PC-3 (cell line): ENCODE measurements at regions of chr5 and their contacts with region 1.

Region 1: DNA sequence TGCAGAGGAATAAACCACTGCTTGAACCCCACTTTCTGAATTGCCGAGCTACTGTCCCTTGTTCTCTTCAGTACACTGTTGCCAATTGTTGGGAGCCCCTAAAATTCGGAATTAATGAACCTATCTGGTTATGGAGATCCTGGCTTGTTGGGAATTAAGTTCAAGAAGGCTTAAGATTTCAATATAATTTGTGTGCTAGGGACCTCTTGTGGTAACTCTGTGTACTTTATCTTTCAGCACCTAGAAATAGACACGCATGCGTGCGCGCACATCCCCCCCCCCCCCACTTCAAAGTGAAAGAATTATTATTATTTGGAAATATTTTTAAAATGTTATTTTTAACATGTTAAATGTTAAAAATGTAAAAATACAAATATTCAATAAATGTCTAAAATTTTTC is 53.3 kb upstream of the FAM169A start:
- DNase-seq: peak; percentile 63
- ATAC-seq: no peak; the same call in 1 of the 2 replicates
- H3K4me3 ChIP-seq: no peak overlapping the region
- H3K27ac ChIP-seq: no peak overlapping the region
- H3K4me1 ChIP-seq: peaks cover 8% of the 10 kb centered on the region; the same call in 1 of the 2 replicates
- H3K27me3 ChIP-seq: no peaks in the 10 kb centered on the region
- CTCF ChIP-seq: peak; percentile 50; the same call in 1 of the 2 replicates

Region 2: GRCh38 chr5:74507370-74508005 is 412.0 kb before region 1 on chr5:
- CTCF ChIA-PET with region 1: no interaction called
- POLR2A ChIA-PET with region 1: no interaction called
- intact Hi-C with region 1: no loop called
- DNase-seq: no peak
- ATAC-seq: no peak
- H3K4me3 ChIP-seq: no peak overlapping the region
- H3K27ac ChIP-seq: no peak overlapping the region
- H3K4me1 ChIP-seq: no peaks in the 10 kb centered on the region
- H3K27me3 ChIP-seq: no peaks in the 10 kb centered on the region
- CTCF ChIP-seq: no peak

Region 3: DNA sequence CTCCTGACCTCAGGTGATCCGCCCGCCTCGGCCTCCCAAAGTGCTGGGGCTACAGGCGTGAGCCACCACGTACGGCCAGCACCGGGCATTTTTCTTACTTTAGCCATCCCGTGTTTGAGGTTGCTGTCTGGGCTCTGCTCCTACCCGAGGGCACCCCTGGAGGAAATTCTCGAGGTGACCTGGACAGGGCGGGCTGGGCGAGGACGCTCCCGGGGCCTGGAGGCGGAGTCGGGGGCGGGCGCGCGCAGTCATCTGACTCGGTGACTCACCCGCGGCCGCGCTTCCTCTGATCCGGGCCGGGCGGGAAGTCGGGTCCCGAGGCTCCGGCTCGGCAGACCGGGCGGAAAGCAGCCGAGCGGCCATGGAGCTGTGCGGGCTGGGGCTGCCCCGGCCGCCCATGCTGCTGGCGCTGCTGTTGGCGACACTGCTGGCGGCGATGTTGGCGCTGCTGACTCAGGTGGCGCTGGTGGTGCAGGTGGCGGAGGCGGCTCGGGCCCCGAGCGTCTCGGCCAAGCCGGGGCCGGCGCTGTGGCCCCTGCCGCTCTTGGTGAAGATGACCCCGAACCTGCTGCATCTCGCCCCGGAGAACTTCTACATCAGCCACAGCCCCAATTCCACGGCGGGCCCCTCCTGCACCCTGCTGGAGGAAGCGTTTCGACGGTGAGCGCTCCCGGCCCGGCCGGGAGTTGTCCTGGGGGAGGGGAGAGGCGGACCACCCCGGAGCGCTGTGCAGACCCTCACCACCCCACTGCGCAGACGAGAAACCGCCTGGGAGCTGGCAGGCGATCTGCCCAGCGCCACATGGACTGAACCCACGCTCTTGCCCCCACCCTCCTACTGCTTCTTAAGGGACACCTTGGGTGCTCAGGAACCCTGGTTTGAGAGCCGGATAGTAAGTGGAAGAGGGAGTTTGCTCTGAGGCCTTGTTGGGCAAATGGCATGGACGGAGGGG is 234.3 kb before region 1 on chr5 and contains the start of gene HEXB:
- CTCF ChIA-PET with region 1: no interaction called
- POLR2A ChIA-PET with region 1: no interaction called
- intact Hi-C with region 1: loop called (anchors 5 kb)
- DNase-seq: peak; percentile 75
- ATAC-seq: peak; percentile 93
- H3K4me3 ChIP-seq: peak within 1 kb of the TSS; percentile 93
- H3K27ac ChIP-seq: 0 out of 2 replicates have a peak within 1 kb of the TSS, but pooled peaks have one; percentile 9
- H3K4me1 ChIP-seq: peaks cover 18% of the 10 kb centered on the region; the same call in 1 of the 2 replicates
- H3K27me3 ChIP-seq: no peaks in the 10 kb centered on the region
- CTCF ChIP-seq: no peak
- total RNA-seq, gene HEXB: 91.5 and 131 TPM in 2 replicates

Region 4: DNA sequence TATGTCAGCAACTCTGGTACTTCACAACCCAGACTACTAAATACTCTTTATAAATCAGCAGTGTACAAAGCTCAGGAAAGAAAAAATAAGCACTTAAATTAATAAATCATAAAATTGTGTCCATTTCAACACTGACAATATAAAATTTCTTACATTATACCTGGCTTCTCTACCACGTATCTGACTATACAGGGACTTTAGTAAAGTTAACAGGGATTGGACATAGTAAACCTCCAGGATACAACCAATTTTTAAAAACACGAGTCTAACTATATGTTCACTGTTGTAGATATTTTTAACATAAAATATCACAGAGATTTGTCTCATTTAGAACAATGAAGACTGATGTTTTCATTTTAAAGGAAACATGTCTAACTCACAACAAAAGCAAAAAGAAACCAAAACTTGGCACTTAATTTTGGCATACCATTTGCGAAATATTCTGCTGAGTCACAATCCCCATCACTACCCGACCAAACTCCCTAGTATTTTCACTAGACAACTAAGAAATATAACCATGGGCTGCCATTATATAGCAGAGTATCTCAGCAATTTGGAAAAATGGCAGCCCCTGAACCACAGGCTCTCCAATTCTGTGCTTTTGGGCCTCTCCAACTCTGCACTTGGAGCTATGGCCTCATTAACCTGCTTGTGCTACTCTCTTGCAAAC is 67.7 kb before region 1 on chr5:
- CTCF ChIA-PET with region 1: no interaction called
- POLR2A ChIA-PET with region 1: no interaction called
- intact Hi-C with region 1: no loop called
- DNase-seq: peak; percentile 26
- ATAC-seq: no peak
- H3K4me3 ChIP-seq: no peak overlapping the region
- H3K27ac ChIP-seq: no peak overlapping the region; the same call in 1 of the 2 replicates
- H3K4me1 ChIP-seq: peaks cover 7% of the 10 kb centered on the region
- H3K27me3 ChIP-seq: no peaks in the 10 kb centered on the region
- CTCF ChIP-seq: no peak